Activated B cell treated with CpG ODN at 0.5 μM for 24 hours (primary cell): ENCODE measurements at regions of chr4 and their contacts with region 1.

Region 1: DNA sequence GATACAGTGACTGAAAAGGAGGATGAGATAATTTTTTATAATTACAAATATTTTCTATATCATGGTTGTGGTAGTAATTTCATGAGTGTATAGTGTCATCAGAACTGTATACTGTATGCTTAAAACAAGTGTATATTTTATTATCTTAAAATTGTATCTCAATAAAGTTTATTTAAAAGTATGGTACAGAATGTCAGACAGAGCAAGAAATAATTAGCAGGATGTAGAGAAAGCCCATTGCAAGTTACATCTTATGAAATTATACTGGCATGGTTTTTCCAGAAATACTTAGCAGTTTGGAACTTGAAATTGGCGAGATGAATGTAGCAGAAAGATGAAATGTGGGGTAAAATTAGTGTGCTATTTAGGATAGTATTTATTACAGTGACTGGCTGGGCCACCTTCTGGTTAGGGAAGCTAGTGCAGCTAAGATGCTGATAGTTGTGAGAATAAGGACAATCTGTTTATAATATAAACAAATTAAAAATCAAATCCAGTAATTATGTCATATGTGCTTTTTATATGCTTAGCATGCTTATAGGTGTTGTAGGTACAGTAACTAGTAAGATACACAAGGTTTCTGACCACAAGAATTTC is 74.7 kb downstream of the IL15 start:
- DNase-seq: no peak
- ATAC-seq: no peak
- H3K4me3 Mint-ChIP-seq: no peak overlapping the region
- H3K27ac Mint-ChIP-seq: no peak overlapping the region
- H3K4me1 Mint-ChIP-seq: peaks cover 9% of the 10 kb centered on the region
- H3K27me3 Mint-ChIP-seq: no peaks in the 10 kb centered on the region
- CTCF ChIP-seq: no peak

Region 2: GRCh38 chr4:140861359-140862176 is 849.5 kb before region 1 on chr4:
- CTCF ChIA-PET with region 1: no interaction called
- POLR2A ChIA-PET with region 1: no interaction called
- intact Hi-C with region 1: loop called (anchors 5 kb)
- DNase-seq: no peak
- ATAC-seq: peak; percentile 67
- H3K4me3 Mint-ChIP-seq: no peak overlapping the region
- H3K27ac Mint-ChIP-seq: no peak overlapping the region
- H3K4me1 Mint-ChIP-seq: peaks cover 14% of the 10 kb centered on the region
- H3K27me3 Mint-ChIP-seq: peaks cover 2% of the 10 kb centered on the region
- CTCF ChIP-seq: no peak

Region 3: DNA sequence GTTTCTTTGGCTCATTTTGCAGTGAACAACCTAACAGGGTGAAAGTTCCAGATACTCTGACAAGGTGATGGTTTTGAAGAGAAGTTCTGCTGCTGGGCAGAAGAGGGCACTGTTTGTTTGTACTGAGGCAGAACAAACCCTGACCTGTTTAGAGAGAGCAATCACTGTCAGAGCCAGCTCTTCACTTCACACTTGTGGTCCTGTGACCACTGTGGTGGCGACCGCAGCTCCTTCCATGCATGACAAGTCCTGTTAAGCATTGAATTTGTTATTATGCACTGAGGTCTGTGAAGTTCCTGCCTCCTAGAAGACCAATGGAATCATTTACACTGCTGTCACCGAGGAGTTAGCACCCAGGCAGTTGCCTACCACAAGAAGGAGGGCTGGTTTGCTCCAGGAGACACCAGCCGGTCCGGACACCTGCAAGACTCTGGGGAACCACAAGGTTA is 403.8 kb before region 1 on chr4:
- CTCF ChIA-PET with region 1: no interaction called
- POLR2A ChIA-PET with region 1: no interaction called
- intact Hi-C with region 1: loop called (anchors 1 kb)
- DNase-seq: peak; percentile 21
- ATAC-seq: peak; percentile 81
- H3K4me3 Mint-ChIP-seq: no peak overlapping the region
- H3K27ac Mint-ChIP-seq: no peak overlapping the region
- H3K4me1 Mint-ChIP-seq: peaks cover 10% of the 10 kb centered on the region
- H3K27me3 Mint-ChIP-seq: peaks cover 5% of the 10 kb centered on the region
- CTCF ChIP-seq: peak; percentile 30

Region 4: GRCh38 chr4:141346144-141346543 is 365.0 kb before region 1 on chr4:
- CTCF ChIA-PET with region 1: interaction called, 4 read pairs
- POLR2A ChIA-PET with region 1: no interaction called
- intact Hi-C with region 1: loop called (anchors 1 kb)
- DNase-seq: no peak
- ATAC-seq: no peak
- H3K4me3 Mint-ChIP-seq: no peak overlapping the region
- H3K27ac Mint-ChIP-seq: no peak overlapping the region
- H3K4me1 Mint-ChIP-seq: peaks cover 5% of the 10 kb centered on the region
- H3K27me3 Mint-ChIP-seq: no peaks in the 10 kb centered on the region
- CTCF ChIP-seq: no peak